A549 (cell line): ENCODE measurements at regions of chr11 and their contacts with region 1.

Region 1: GRCh38 chr11:18791207-18791968 is at the start of gene PTPN5:
- DNase-seq: peak in 1 of 2 experiments; percentile 34
- ATAC-seq: peak; percentile 32 to 68; a peak in 3 of 6 replicates
- H3K4me3 ChIP-seq: peak within 1 kb of the TSS; percentile 54
- H3K27ac ChIP-seq: peak within 1 kb of the TSS in 1 of 2 experiments; percentile 17; a peak in 1 of 6 replicates
- H3K4me1 ChIP-seq: peaks cover 5% of the 10 kb centered on the region; the same call in 1 of the 3 replicates
- CTCF ChIP-seq: no peak
- EP300 ChIP-seq: no peak
- POLR2A ChIP-seq: no peak
- RAD21 ChIP-seq: no peak
- polyA plus RNA-seq, gene PTPN5: 0.04 TPM in 1 of 2 replicates, not detected in the other

Region 2: DNA sequence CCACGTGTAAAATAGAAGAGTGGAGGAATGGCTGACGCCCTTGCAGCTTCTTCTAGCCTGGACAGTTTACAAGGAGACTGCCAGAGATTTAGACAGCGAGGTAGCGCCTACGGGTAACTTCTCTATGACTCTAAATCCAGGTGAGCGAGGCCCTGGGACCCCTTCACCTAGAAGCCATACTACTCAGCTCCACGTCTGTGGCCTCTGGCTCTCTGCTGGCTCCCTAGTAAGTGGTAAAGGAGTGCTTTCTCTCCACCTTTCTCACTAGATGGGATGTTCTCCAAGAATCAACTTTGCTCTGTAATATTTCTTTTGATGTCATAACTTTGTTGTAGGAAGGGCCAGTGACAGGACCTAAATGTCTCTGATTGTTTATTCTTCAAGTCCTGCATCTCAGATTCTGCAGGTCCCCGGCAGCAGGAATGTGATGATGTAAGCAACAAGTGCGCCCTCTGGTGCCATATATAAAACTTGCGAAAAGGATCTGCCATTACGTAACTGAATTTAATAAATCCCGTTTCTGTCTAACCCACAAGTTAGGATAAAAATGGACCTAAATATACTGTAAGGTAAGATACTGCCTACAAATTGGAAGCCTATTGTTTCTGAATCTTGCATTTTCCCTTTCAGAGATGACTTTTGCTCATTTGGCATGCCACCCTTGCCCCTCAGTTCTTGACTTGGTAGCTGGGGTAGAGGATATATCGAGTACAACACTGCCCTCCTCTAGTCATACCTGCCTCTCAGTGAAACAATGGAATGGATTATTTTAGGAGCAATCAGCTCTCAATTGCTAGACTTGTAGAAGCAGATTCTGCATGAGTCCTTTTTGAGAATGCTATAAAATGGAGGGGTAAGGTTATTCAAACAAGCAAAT is 11.2 kb after region 1 on chr11:
- CTCF ChIA-PET with region 1: interaction called, 34 read pairs
- POLR2A ChIA-PET with region 1: no interaction called
- DNase-seq: peak; percentile 66 to 82
- ATAC-seq: peak; percentile 68 to 83; a peak in 5 of 6 replicates
- H3K4me3 ChIP-seq: no peak overlapping the region
- H3K27ac ChIP-seq: no peak overlapping the region
- H3K4me1 ChIP-seq: no peaks in the 10 kb centered on the region
- CTCF ChIP-seq: peak; percentile 81; the same call in 2 of the 3 replicates
- EP300 ChIP-seq: no peak
- POLR2A ChIP-seq: no peak
- RAD21 ChIP-seq: peak; percentile 65 to 74